Upper lobe of right lung (tissue), 1 donor: ENCODE measurements at regions of chr1 and their contacts with region 1.

Region 1: DNA sequence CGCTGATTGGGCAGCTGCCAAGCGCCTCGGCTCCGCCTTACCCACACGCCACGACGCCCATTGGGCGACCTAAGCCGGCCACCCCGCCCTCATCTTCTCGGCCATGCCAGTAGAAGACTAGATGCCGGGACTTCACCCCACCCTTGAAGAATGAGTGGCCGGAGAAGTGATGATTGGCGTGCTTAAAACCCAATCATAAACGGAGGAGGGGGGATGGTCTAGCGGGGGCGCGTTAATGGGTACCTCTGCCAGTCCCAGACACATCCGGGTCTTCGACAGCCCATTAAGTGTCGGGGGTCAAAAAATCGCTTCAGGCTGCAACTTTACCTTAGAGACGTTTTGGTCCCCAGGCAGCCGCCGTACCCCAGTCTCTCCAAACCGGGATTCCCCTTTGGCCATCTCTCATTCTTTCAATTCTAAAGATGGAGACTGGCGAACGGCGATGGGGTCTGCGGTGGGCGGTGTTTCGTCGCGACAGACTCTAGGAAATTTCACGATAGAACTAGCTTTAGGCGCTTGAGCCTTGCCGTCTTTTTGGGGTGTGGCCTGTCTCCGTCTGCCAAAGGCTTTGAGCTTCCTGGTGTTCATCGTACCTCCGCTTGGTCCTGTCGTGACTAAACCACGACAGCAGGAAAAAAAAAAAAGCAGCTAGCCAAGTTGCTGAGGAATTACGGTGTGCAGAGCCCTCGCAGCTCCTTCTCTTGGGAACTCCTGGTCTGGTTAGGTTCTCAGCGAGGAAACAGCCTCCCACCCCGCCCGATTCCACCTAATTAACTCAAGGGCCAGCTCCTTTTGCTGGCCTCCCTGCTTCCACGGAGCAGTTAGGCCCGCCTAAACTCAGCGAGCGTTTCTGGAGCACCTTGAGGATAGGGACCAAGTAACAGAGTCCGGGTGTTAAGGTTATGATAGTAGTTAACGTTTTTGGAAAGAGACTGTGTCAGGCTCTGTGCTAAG is at the start of gene GATAD2B:
- DNase-seq: peak; percentile 100
- ATAC-seq: peak; percentile 98
- H3K4me3 ChIP-seq: peak within 1 kb of the TSS; percentile 67
- H3K27ac ChIP-seq: peak within 1 kb of the TSS; percentile 86
- H3K4me1 ChIP-seq: peaks cover 31% of the 10 kb centered on the region
- H3K27me3 ChIP-seq: no peaks in the 10 kb centered on the region
- CTCF ChIP-seq: no peak
- total RNA-seq, gene GATAD2B: 55.1 TPM

Region 2: GRCh38 chr1:153816283-153816889 is 106.9 kb before region 1 on chr1:
- intact Hi-C with region 1: loop called (anchors 10 kb)
- DNase-seq: peak; percentile 21
- ATAC-seq: no peak
- H3K4me3 ChIP-seq: no peak overlapping the region
- H3K27ac ChIP-seq: no peak overlapping the region
- H3K4me1 ChIP-seq: no peaks in the 10 kb centered on the region
- H3K27me3 ChIP-seq: no peaks in the 10 kb centered on the region
- CTCF ChIP-seq: no peak